Heart left ventricle (tissue), 16 donors: ENCODE measurements at regions of chr14 and their contacts with region 1.

Region 1: DNA sequence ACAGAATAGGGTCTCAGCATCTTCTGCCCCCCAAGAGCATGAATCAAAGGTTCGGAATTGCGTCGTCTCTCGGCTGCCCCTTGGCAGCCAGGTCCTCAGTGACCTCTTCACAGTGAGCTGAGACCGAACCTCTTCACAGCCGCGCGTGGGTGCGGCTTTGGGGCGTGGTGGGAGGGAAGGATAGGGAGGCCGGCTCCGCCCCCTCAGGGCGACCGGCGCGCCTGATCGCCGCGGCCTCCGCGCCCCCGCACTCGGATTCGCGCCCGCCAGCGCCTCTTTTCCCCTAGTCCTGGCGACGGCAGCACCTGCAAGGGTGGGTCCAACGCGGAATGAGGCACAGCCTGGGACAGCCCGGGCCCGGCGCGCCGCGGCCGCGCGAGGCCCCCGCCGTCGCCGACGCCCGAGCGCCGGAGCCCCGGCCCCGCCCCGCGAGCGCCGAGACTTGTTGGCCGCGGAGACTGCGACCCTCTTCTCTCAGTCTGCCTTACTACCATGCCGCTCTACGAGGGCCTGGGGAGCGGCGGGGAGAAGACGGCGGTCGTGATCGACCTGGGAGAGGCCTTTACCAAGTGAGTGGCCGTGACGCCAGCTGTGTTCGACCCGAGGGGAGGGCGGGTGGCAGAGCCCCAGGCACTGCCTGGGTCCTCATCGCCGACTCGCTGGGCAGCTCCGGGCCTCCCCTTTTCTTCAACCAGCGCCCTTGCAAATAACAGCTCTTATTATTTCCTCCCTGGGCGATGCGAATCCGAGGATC is at the start of gene ACTR10:
- DNase-seq: peak; percentile 86 to 95 (median 91)
- ATAC-seq: peak; percentile 88 to 99 (median 97)
- H3K4me3 ChIP-seq: peak within 1 kb of the TSS; percentile 77 to 97 (median 90)
- H3K27ac ChIP-seq: peak within 1 kb of the TSS; percentile 89 to 99 (median 96)
- H3K4me1 ChIP-seq: peaks cover 0 to 22% (median 17%) of the 10 kb centered on the region in 12 donors
- H3K27me3 ChIP-seq: no peaks in the 10 kb centered on the region
- CTCF ChIP-seq: no peak
- POLR2A ChIP-seq: peak in 1 of 2 donors; percentile 70
- total RNA-seq, gene ACTR10: 67.0 to 86.9 (median 78.3) TPM

Region 2: GRCh38 chr14:58239244-58240195 is 39.6 kb after region 1 on chr14:
- intact Hi-C with region 1: loop called in 5 of 10 experiments (anchors 1 to 5 kb)
- DNase-seq: peak; percentile 63 to 83 (median 70)
- ATAC-seq: peak; percentile 27 to 46 (median 35)
- H3K4me3 ChIP-seq: peak overlapping the region; percentile 48 to 74 (median 65)
- H3K27ac ChIP-seq: peak overlapping the region; percentile 19 to 85 (median 76)
- H3K4me1 ChIP-seq: peaks cover 0 to 24% (median 3%) of the 10 kb centered on the region in 12 donors
- H3K27me3 ChIP-seq: no peaks in the 10 kb centered on the region
- CTCF ChIP-seq: no peak
- POLR2A ChIP-seq: no peak

Region 3: GRCh38 chr14:58244556-58245387 is 44.9 kb after region 1 on chr14 and contains the start of gene PSMA3:
- intact Hi-C with region 1: loop called in 5 of 10 experiments (anchors 1 to 5 kb)
- DNase-seq: peak; percentile 98 to 99 (median 98)
- ATAC-seq: peak; percentile 95 to 99 (median 98)
- H3K4me3 ChIP-seq: peak within 1 kb of the TSS; percentile 66 to 96 (median 84)
- H3K27ac ChIP-seq: peak within 1 kb of the TSS; percentile 82 to 99 (median 96)
- H3K4me1 ChIP-seq: peaks cover 4 to 42% (median 30%) of the 10 kb centered on the region in 12 donors
- H3K27me3 ChIP-seq: no peaks in the 10 kb centered on the region
- CTCF ChIP-seq: peak in 3 of 12 donors; percentile 13 to 35 (median 30)
- POLR2A ChIP-seq: peak; percentile 7 to 75
- total RNA-seq, gene PSMA3: 121 to 232 (median 155) TPM